ENCODE measurements at regions of chr9 and their contacts with region 1.

Region 1: DNA sequence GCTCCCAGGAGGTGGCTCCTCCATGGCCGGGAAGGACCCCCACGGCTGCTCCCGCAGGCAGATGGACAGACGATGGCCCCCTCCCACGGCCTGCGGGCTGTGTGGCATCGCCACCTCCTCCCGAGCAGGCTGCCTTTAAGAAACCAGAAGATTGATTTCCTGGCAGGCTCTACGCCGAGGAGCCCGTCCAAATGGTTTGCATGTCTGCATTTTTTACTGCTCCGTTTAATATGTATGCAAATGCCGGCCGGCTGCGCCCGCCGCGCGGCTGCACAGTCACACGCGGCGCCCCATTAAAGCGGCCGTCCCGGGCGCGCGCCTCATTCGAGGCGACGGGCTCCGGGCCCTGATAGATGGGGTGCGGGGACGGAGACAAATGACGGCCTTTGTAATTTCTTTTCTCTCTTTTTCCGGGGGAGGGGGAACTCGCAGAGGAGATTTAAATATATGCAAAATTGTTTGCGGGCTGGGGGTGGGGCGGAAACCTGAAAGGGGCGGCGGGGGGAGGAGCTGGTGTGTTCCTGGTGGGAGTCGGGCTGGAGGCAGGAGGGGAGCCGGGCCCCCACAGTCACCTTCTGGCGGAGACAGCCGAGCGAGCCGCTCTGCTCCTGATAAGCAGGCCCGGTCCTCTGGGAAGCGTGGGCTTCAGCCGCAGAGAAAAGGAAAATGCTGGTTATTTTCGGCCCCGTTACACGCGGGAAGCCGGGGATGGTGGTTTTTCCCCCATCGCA is 158.7 kb upstream of the IER5L start:
- DNase-seq: peak; percentile 27 to 55 (median 33)
- H3K4me3 ChIP-seq: peak overlapping the region; percentile 26 to 69 (median 34)
- H3K4me3 Mint-ChIP-seq: peak overlapping the region; percentile 76 to 89
- H3K27ac ChIP-seq: peak overlapping the region; percentile 90 to 92
- H3K27ac Mint-ChIP-seq: peak overlapping the region; percentile 66 to 97 (median 95)
- H3K4me1 ChIP-seq: peaks cover 71 to 89% of the 10 kb centered on the region in 2 donors
- H3K4me1 Mint-ChIP-seq: peaks cover 59% of the 10 kb centered on the region
- H3K27me3 ChIP-seq: no peaks in the 10 kb centered on the region
- H3K27me3 Mint-ChIP-seq: peaks cover 0 to 4% (median 0%) of the 10 kb centered on the region in 3 donors
- CTCF ChIP-seq: no peak

Region 2: GRCh38 chr9:129370770-129371169 is 34.0 kb after region 1 on chr9:
- intact Hi-C with region 1: loop called in 1 of 2 experiments (anchors 5 kb)
- DNase-seq: no peak
- H3K4me3 ChIP-seq: no peak overlapping the region
- H3K4me3 Mint-ChIP-seq: no peak overlapping the region
- H3K27ac ChIP-seq: no peak overlapping the region
- H3K27ac Mint-ChIP-seq: peak overlapping the region in 1 of 7 donors; percentile 35
- H3K4me1 ChIP-seq: peaks cover 4 to 6% of the 10 kb centered on the region in 2 donors
- H3K4me1 Mint-ChIP-seq: peaks cover 7% of the 10 kb centered on the region
- H3K27me3 ChIP-seq: no peaks in the 10 kb centered on the region
- H3K27me3 Mint-ChIP-seq: peaks cover 0 to 4% (median 2%) of the 10 kb centered on the region in 3 donors
- CTCF ChIP-seq: no peak

Region 3: GRCh38 chr9:129383561-129384416 is 47.0 kb after region 1 on chr9:
- intact Hi-C with region 1: no loop called
- DNase-seq: peak; percentile 92 to 93 (median 92)
- H3K4me3 ChIP-seq: peak overlapping the region; percentile 41 to 79 (median 59)
- H3K4me3 Mint-ChIP-seq: peak overlapping the region; percentile 76 to 88
- H3K27ac ChIP-seq: peak overlapping the region; percentile 91 to 96
- H3K27ac Mint-ChIP-seq: peak overlapping the region; percentile 97 to 99 (median 97)
- H3K4me1 ChIP-seq: peaks cover 26 to 38% of the 10 kb centered on the region in 2 donors
- H3K4me1 Mint-ChIP-seq: peaks cover 35% of the 10 kb centered on the region
- H3K27me3 ChIP-seq: no peaks in the 10 kb centered on the region
- H3K27me3 Mint-ChIP-seq: peaks cover 2% of the 10 kb centered on the region in 3 donors
- CTCF ChIP-seq: peak; percentile 26

Measured in CD14-positive monocyte (primary cell).